Natural killer cell (primary cell): ENCODE measurements at regions of chr18 and their contacts with region 1.

Region 1: GRCh38 chr18:77147418-77147852 is 14.9 kb upstream of the MBP start:
- DNase-seq: peak in 1 of 2 donors; percentile 43
- ATAC-seq: peak; percentile 83 to 88 (median 83)
- H3K4me3 ChIP-seq: no peak overlapping the region
- H3K4me3 Mint-ChIP-seq: peak overlapping the region; percentile 33
- H3K27ac ChIP-seq: peak overlapping the region; percentile 51
- H3K27ac Mint-ChIP-seq: peak overlapping the region; percentile 83 to 87
- H3K4me1 ChIP-seq: peaks cover 26% of the 10 kb centered on the region
- H3K4me1 Mint-ChIP-seq: peaks cover 42 to 54% of the 10 kb centered on the region in 2 donors
- H3K27me3 ChIP-seq: no peaks in the 10 kb centered on the region
- H3K27me3 Mint-ChIP-seq: no peaks in the 10 kb centered on the region
- CTCF ChIP-seq: no peak

Region 2: DNA sequence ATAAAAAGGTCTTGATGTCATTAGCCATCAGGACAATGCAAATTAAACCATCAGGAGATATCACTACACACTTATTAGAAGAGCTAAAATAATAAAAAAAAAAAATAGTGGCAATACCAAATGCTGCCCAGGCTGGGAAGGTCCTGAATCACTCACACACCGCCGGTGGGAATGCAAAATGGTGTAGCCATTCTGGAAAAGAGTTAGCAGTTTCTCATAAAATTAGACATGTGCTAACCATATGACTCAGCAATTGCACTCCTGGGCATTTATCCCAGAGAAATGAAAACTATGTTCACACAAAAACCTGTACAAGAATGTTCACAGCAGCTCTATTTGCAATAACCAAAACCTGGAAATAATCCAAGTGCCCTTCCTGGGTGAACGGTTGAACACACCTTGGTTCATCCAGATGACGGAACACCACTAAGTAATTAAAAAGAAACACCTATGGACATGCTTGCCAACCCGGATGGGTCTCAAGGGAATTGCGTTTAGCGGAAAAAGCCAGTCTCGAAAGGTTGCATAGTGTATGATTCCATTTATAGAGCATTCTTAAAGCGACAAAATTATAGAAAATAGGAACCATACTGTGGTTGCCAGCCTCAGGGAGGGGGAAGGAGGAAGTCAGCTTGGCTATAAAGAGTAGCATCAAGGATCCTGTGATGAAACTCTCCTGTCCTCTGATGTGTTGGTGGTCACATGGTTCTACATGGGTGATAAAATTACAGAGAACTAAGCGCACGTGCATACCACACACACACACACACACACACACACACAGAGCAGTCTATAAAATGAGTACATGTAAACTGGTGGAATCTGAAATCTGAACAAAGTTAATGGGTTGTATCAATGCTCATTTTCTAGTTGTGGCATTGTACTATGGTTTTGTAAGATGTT is 19.4 kb before region 1 on chr18:
- intact Hi-C with region 1: no loop called
- DNase-seq: peak; percentile 55 to 84
- ATAC-seq: peak; percentile 50 to 82 (median 66)
- H3K4me3 ChIP-seq: peak overlapping the region; percentile 2
- H3K4me3 Mint-ChIP-seq: peak overlapping the region; percentile 94
- H3K27ac ChIP-seq: peak overlapping the region; percentile 84
- H3K27ac Mint-ChIP-seq: peak overlapping the region; percentile 88 to 95
- H3K4me1 ChIP-seq: peaks cover 47% of the 10 kb centered on the region
- H3K4me1 Mint-ChIP-seq: peaks cover 82% of the 10 kb centered on the region in 2 donors
- H3K27me3 ChIP-seq: no peaks in the 10 kb centered on the region
- H3K27me3 Mint-ChIP-seq: no peaks in the 10 kb centered on the region
- CTCF ChIP-seq: no peak

Region 3: GRCh38 chr18:77177009-77177408 is 29.6 kb after region 1 on chr18:
- intact Hi-C with region 1: no loop called
- DNase-seq: no peak
- ATAC-seq: no peak
- H3K4me3 ChIP-seq: no peak overlapping the region
- H3K4me3 Mint-ChIP-seq: no peak overlapping the region
- H3K27ac ChIP-seq: no peak overlapping the region
- H3K27ac Mint-ChIP-seq: no peak overlapping the region
- H3K4me1 ChIP-seq: no peaks in the 10 kb centered on the region
- H3K4me1 Mint-ChIP-seq: peaks cover 8 to 12% of the 10 kb centered on the region in 2 donors
- H3K27me3 ChIP-seq: no peaks in the 10 kb centered on the region
- H3K27me3 Mint-ChIP-seq: no peaks in the 10 kb centered on the region
- CTCF ChIP-seq: no peak

Region 4: DNA sequence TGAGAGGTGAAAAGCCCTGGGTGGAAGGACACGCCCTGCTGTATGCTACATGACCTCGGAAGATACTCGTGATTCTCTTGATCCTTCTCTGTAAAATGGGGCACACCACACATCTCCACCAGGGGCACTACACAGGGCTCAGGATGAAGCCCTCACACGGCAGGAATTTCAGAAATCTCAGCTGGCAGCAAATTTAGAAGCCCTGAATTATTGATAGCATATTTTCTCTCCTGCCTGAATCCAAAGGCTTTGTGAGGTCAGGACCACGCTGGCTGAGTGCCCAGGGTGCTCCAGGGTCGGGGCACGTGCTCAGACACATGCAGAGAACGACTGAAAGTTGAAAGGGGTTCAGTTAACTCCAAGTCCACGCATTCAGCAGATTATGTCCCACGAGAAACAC is 60.1 kb after region 1 on chr18:
- intact Hi-C with region 1: loop called (anchors 5 kb)
- DNase-seq: peak in 1 of 2 donors; percentile 82
- ATAC-seq: peak; percentile 61 to 74 (median 74)
- H3K4me3 ChIP-seq: no peak overlapping the region
- H3K4me3 Mint-ChIP-seq: no peak overlapping the region
- H3K27ac ChIP-seq: no peak overlapping the region
- H3K27ac Mint-ChIP-seq: peak overlapping the region; percentile 47 to 96
- H3K4me1 ChIP-seq: peaks cover 41% of the 10 kb centered on the region
- H3K4me1 Mint-ChIP-seq: peaks cover 45 to 47% of the 10 kb centered on the region in 2 donors
- H3K27me3 ChIP-seq: no peaks in the 10 kb centered on the region
- H3K27me3 Mint-ChIP-seq: no peaks in the 10 kb centered on the region
- CTCF ChIP-seq: peak; percentile 49